ENCODE measurements at regions of chr15 and their contacts with region 1.

Region 1: DNA sequence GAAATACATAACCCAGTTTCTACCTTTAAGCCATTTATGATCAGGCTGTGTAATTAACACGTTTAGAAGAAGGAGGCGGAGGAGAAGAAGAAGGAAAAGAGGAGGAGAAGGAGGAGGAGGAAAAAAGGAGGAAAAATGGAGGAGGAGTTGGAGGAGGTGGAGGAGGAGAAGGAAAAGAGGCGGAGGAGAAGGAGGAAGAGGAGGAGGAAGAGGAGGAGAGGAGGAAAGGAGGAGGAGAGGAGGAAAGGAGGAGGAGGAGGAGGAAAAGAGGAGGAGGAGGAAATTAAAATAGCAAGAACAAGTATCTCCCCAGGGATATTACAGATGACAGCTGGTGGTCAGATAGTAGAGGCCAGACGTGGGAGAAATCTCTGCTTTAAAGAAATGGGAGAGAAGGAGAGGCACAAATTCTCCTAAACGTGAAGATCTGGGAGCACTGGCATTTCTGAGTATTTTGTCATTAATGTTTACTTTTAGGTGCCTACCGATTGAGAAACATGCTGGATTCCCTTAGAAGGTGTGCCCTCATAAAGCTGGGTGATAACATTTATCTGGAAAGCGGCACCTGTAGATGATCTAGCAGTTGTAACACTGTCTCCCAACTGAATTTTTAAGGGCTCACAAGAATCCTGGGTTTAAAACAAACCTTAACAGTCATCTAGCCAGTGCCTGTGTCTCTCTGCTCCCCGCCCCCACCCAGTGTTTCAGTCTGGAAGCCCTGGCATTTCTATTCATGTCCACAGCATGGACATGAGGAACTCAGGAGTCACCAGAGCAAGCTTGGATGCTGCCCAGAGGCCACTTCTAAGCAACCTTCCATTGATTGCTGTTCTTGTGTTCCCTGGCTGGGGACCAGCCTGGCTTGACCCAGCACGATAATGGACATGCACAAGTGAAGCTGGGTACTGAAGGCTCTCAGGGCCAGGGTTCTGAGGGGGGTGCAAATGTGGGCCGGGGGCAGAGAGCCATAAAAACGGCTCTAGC is 75.2 kb downstream of the CHRNA7 start:
- DNase-seq: no peak

Region 2: GRCh38 chr15:32003558-32003957 is 102.0 kb before region 1 on chr15:
- intact Hi-C with region 1: no loop called
- DNase-seq: no peak

Region 3: DNA sequence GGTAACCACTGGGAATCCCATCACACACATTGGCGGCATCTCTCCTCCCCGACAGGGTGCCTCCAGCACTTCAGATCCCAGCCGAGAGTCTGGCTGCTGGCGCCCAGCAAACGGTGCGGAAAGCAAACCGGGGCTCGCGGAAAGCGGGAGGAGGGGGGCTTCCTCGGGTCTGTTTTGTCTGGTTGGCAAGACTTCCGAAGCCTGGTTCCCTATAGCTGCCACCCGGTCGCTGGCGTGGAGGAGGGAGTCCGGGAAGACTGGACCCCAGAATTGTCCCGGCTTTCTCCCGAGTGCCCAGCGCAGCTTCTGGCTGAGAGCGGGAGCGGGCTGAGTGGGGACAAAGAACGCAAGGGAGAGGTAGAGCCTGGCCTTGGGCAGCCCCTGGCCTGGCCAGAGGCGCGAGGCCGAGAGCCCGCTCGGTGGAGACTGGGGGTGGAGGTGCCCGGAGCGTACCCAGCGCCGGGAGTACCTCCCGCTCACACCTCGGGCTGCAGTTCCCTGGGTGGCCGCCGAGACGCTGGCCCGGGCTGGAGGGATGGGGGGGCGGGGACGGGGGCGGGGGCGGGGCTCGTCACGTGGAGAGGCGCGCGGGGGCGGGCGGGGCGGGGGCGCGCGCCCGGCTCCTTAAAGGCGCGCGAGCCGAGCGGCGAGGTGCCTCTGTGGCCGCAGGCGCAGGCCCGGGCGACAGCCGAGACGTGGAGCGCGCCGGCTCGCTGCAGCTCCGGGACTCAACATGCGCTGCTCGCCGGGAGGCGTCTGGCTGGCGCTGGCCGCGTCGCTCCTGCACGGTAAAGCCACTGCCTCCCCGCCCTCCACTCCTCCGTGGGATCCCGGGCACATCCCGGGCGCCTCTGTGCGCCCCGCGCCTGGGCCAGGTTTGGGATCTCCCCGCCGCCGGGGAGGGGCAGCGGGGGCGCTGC is 75.4 kb before region 1 on chr15 and contains the start of gene CHRNA7:
- intact Hi-C with region 1: loop called (anchors 5 kb)
- DNase-seq: no peak
- total RNA-seq, gene CHRNA7: 1.1 TPM

Region 4: GRCh38 chr15:32042269-32042972 is 63.1 kb before region 1 on chr15:
- intact Hi-C with region 1: no loop called
- DNase-seq: no peak

Measured in cardiac septum (tissue), 1 donor.